ENCODE measurements at regions of chr2 and their contacts with region 1.

Region 1: GRCh38 chr2:38602732-38603401 is at the start of gene HNRNPLL:
- DNase-seq: peak; percentile 98 to 99
- H3K4me3 ChIP-seq: peak within 1 kb of the TSS; percentile 71 to 77
- H3K27ac ChIP-seq: peak within 1 kb of the TSS; percentile 99
- H3K4me1 ChIP-seq: peaks cover 0 to 7% of the 10 kb centered on the region in 2 donors
- H3K27me3 ChIP-seq: no peaks in the 10 kb centered on the region
- CTCF ChIP-seq: no peak
- POLR2A ChIP-seq: peak; percentile 91 to 99
- total RNA-seq, gene HNRNPLL: 35.6 to 100 (median 55.4) TPM

Region 2: GRCh38 chr2:38720613-38721241 is 117.9 kb after region 1 on chr2:
- intact Hi-C with region 1: loop called (anchors 10 kb)
- DNase-seq: peak; percentile 82 to 90
- H3K4me3 ChIP-seq: no peak overlapping the region
- H3K27ac ChIP-seq: peak overlapping the region; percentile 28 to 65
- H3K4me1 ChIP-seq: peaks cover 3 to 7% of the 10 kb centered on the region in 2 donors
- H3K27me3 ChIP-seq: no peaks in the 10 kb centered on the region
- CTCF ChIP-seq: no peak
- POLR2A ChIP-seq: no peak